ENCODE measurements at regions of chr14 and their contacts with region 1.

Region 1: DNA sequence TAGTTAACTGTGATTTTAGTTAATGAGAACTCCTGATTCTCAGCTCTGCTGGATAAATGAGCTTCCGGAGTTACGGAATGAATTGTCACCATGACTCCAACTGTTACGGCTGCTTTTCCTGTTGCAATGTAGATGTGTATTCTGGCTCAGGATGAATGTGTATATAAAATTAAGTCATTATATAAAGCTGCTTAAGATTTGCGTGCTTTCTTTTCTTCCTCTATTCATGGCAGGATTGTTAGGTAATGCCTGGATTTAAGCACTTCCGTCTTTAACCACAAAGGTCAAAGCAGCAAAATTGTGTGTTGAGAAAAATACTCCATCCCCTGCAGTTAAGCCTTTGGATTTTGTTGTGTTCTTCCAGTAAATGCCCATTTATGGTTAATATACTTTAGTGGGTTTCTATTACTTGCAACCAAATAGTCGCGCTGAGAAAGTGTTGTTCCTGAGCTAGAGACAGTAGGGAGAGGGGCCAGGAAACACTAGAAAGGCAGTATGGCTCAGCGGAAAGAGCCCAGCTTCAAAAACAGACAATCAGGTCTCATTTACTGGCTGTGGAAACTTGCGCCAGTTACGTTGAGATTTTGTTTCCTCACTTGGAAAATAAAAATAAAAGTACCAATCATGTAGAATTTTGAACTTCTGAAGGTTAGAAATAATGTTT is 9.4 kb upstream of the CCDC175 start:
- DNase-seq: no peak
- H3K4me3 Mint-ChIP-seq: peak overlapping the region; percentile 19
- H3K27ac Mint-ChIP-seq: no peak overlapping the region
- H3K4me1 Mint-ChIP-seq: peaks cover 4% of the 10 kb centered on the region
- H3K27me3 Mint-ChIP-seq: no peaks in the 10 kb centered on the region

Region 2: DNA sequence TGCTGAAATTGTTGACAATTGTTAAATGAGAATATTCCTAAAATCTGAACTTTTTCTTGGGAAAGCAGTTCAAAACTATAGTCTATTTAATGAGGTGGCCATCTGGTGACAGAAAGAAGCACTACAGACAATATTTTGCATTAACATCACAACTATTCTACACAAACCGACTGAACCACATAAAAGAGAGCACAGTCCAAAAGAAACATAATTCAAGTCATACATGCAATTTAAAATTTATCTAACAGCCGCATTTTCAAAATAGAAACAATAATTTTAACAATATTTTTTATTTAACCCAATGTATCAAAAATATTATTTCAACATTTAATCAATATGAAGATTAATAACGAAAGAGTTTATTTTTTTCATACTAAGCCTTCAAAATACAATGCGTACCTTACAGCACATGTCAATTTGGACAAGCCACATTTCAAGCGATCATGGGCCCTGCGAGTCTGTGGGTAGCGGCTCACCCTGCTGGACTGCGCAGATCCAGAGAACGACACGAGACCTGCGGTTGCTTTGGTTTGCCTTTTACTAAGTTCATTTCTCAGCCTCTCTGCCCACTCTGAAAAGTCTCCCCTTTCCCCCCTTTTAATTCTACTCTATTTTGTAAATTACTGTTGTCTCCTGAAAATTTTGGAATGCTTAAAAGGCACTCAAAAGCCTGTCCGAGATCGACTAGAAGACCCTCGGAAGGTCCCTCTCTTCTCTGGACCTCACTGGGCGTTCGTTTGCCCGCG is 333.0 kb after region 1 on chr14:
- CTCF ChIA-PET with region 1: interaction called, 3 read pairs
- intact Hi-C with region 1: loop called (anchors 5 kb)
- DNase-seq: peak; percentile 27
- H3K4me3 Mint-ChIP-seq: peak overlapping the region; percentile 54
- H3K27ac Mint-ChIP-seq: no peak overlapping the region
- H3K4me1 Mint-ChIP-seq: peaks cover 7% of the 10 kb centered on the region
- H3K27me3 Mint-ChIP-seq: peaks cover 43% of the 10 kb centered on the region

Measured in activated naive CD4-positive, alpha-beta T cell treated with anti-CD3 and anti-CD28 coated beads for 36 hours (primary cell).